ENCODE measurements at regions of chr7 and their contacts with region 1.

Region 1: GRCh38 chr7:27662490-27663205 is at the start of gene HIBADH:
- DNase-seq: peak; percentile 94 to 99 (median 97)
- ATAC-seq: peak; percentile 97
- H3K4me3 ChIP-seq: peak within 1 kb of the TSS; percentile 97
- H3K4me3 Mint-ChIP-seq: peak within 1 kb of the TSS; percentile 81 to 92 (median 86)
- H3K27ac ChIP-seq: peak within 1 kb of the TSS; percentile 89
- H3K27ac Mint-ChIP-seq: peak within 1 kb of the TSS; percentile 84 to 97 (median 93)
- H3K4me1 ChIP-seq: peaks cover 6% of the 10 kb centered on the region in 2 donors
- H3K4me1 Mint-ChIP-seq: peaks cover 0 to 40% (median 25%) of the 10 kb centered on the region in 7 donors
- H3K27me3 ChIP-seq: no peaks in the 10 kb centered on the region
- H3K27me3 Mint-ChIP-seq: peaks cover 0 to 2% (median 0%) of the 10 kb centered on the region in 5 donors
- total RNA-seq, gene HIBADH: 8.0 to 16.5 (median 14.3) TPM

Region 2: GRCh38 chr7:26151953-26152781 is 1510.5 kb before region 1 on chr7 and contains the start of gene NFE2L3:
- CTCF ChIA-PET with region 1: no interaction called
- POLR2A ChIA-PET with region 1: no interaction called
- intact Hi-C with region 1: loop called in 1 of 2 experiments (anchors 5 kb)
- DNase-seq: peak; percentile 71 to 90 (median 79)
- ATAC-seq: peak; percentile 90
- H3K4me3 ChIP-seq: peak within 1 kb of the TSS; percentile 77
- H3K4me3 Mint-ChIP-seq: peak within 1 kb of the TSS; percentile 85 to 100 (median 92)
- H3K27ac ChIP-seq: peak within 1 kb of the TSS; percentile 73
- H3K27ac Mint-ChIP-seq: peak within 1 kb of the TSS; percentile 74 to 97 (median 93)
- H3K4me1 ChIP-seq: peaks cover 26 to 33% of the 10 kb centered on the region in 2 donors
- H3K4me1 Mint-ChIP-seq: peaks cover 23 to 56% (median 51%) of the 10 kb centered on the region in 7 donors
- H3K27me3 ChIP-seq: no peaks in the 10 kb centered on the region
- H3K27me3 Mint-ChIP-seq: no peaks in the 10 kb centered on the region
- total RNA-seq, gene NFE2L3: 1.1 to 49.5 (median 4.5) TPM

Region 3: GRCh38 chr7:27739909-27740448 is 77.3 kb after region 1 on chr7 and contains the start of gene TAX1BP1:
- CTCF ChIA-PET with region 1: interaction called, 5 read pairs
- POLR2A ChIA-PET with region 1: interaction called, 42 read pairs
- intact Hi-C with region 1: loop called (anchors 1 kb)
- DNase-seq: peak; percentile 92 to 97 (median 95)
- ATAC-seq: peak; percentile 97
- H3K4me3 ChIP-seq: peak within 1 kb of the TSS; percentile 91
- H3K4me3 Mint-ChIP-seq: peak within 1 kb of the TSS; percentile 81 to 99 (median 97)
- H3K27ac ChIP-seq: peak within 1 kb of the TSS; percentile 87
- H3K27ac Mint-ChIP-seq: peak within 1 kb of the TSS; percentile 76 to 99 (median 93)
- H3K4me1 ChIP-seq: peaks cover 6 to 24% of the 10 kb centered on the region in 2 donors
- H3K4me1 Mint-ChIP-seq: peaks cover 27 to 51% (median 44%) of the 10 kb centered on the region in 7 donors
- H3K27me3 ChIP-seq: no peaks in the 10 kb centered on the region
- H3K27me3 Mint-ChIP-seq: peaks cover 0 to 9% (median 0%) of the 10 kb centered on the region in 5 donors
- total RNA-seq, gene TAX1BP1: 69.4 to 111 (median 108) TPM

Region 4: GRCh38 chr7:27921081-27921836 is 258.6 kb after region 1 on chr7:
- CTCF ChIA-PET with region 1: interaction called, 3 read pairs
- POLR2A ChIA-PET with region 1: no interaction called
- intact Hi-C with region 1: loop called in 1 of 2 experiments (anchors 10 kb)
- DNase-seq: peak in 6 of 9 donors; percentile 17 to 59 (median 44)
- ATAC-seq: peak; percentile 67
- H3K4me3 ChIP-seq: no peak overlapping the region
- H3K4me3 Mint-ChIP-seq: no peak overlapping the region
- H3K27ac ChIP-seq: no peak overlapping the region
- H3K27ac Mint-ChIP-seq: peak overlapping the region in 1 of 9 donors; percentile 11
- H3K4me1 ChIP-seq: no peaks in the 10 kb centered on the region
- H3K4me1 Mint-ChIP-seq: peaks cover 0 to 11% (median 1%) of the 10 kb centered on the region in 7 donors
- H3K27me3 ChIP-seq: no peaks in the 10 kb centered on the region
- H3K27me3 Mint-ChIP-seq: no peaks in the 10 kb centered on the region

Region 5: GRCh38 chr7:28179120-28180030 is 516.7 kb after region 1 on chr7:
- CTCF ChIA-PET with region 1: no interaction called
- POLR2A ChIA-PET with region 1: no interaction called
- intact Hi-C with region 1: loop called (anchors 1 to 2 kb)
- DNase-seq: peak; percentile 57 to 72 (median 71)
- ATAC-seq: peak; percentile 85
- H3K4me3 ChIP-seq: peak overlapping the region; percentile 51
- H3K4me3 Mint-ChIP-seq: peak overlapping the region; percentile 55 to 95 (median 72)
- H3K27ac ChIP-seq: peak overlapping the region; percentile 48
- H3K27ac Mint-ChIP-seq: peak overlapping the region in 8 of 9 donors; percentile 33 to 85 (median 61)
- H3K4me1 ChIP-seq: peaks cover 5 to 11% of the 10 kb centered on the region in 2 donors
- H3K4me1 Mint-ChIP-seq: peaks cover 11 to 50% (median 24%) of the 10 kb centered on the region in 7 donors
- H3K27me3 ChIP-seq: no peaks in the 10 kb centered on the region
- H3K27me3 Mint-ChIP-seq: peaks cover 0 to 43% (median 0%) of the 10 kb centered on the region in 5 donors